ENCODE measurements at regions of chr4 and their contacts with region 1.

Region 1: DNA sequence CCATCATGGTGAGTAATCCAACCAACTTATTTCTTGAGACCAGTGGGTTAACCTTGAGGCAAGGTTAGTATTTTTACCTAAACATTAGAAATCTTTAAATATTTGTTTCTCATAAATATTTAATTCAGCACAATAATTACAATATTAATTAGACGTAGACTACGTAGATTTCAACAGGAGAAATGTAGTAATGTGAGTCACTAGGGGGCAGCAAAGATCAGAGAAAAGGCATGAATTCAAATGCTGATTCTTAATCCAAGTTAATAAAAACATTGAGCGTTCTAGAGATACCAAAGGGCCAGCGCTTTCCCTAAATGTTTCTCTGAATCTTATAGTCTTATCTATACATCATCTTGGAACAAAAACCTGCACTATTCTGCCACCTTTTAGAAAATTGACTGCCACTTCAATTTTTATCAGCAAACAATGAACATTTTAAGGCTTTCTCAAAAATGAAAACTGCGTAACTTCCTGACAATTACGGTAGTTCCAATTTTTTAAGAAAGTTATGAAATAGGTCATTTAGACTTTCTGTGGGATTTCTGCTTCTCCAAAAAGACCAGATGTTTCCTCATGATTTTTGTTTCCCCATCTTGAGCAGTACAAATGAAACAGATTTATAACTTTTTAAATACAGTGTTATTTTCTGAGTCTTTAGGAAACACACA is 180.7 kb downstream of the GASK1B start:
- DNase-seq: peak; percentile 10 to 57 (median 12)
- ATAC-seq: no peak
- H3K4me3 ChIP-seq: no peak overlapping the region
- H3K27ac ChIP-seq: no peak overlapping the region
- H3K4me1 ChIP-seq: no peaks in the 10 kb centered on the region
- H3K27me3 ChIP-seq: no peaks in the 10 kb centered on the region
- CTCF ChIP-seq: peak; percentile 28 to 67 (median 37); a peak in 3 of 6 replicates
- EP300 ChIP-seq: no peak
- POLR2A ChIP-seq: no peak
- RAD21 ChIP-seq: peak; percentile 77 to 83

Region 2: DNA sequence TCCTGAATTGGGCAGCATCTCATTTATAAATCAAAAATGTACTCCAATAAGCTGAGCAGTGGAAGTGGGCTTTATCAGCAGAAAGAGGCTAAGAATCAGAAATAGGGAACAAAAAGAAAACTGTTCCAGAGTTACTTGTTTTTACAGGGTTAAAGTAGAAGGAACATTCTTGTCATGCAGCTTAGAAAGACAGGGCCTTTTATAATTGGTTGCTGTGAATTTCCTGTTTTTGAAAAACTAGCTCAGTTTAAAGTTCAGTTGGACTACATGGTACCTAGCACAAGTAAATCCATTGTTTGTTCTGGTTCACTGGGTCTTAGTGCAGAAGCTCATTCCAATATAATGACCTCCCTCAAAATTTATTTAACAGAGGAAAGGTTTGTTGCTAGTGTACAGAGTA is 570.8 kb before region 1 on chr4:
- CTCF ChIA-PET with region 1: no interaction called
- POLR2A ChIA-PET with region 1: no interaction called
- in situ Hi-C with region 1: no loop called
- intact Hi-C with region 1: no loop called
- DNase-seq: no peak
- ATAC-seq: no peak
- H3K4me3 ChIP-seq: no peak overlapping the region
- H3K27ac ChIP-seq: no peak overlapping the region
- H3K4me1 ChIP-seq: no peaks in the 10 kb centered on the region
- H3K27me3 ChIP-seq: no peaks in the 10 kb centered on the region
- CTCF ChIP-seq: no peak
- EP300 ChIP-seq: no peak
- POLR2A ChIP-seq: no peak
- RAD21 ChIP-seq: no peak

Region 3: DNA sequence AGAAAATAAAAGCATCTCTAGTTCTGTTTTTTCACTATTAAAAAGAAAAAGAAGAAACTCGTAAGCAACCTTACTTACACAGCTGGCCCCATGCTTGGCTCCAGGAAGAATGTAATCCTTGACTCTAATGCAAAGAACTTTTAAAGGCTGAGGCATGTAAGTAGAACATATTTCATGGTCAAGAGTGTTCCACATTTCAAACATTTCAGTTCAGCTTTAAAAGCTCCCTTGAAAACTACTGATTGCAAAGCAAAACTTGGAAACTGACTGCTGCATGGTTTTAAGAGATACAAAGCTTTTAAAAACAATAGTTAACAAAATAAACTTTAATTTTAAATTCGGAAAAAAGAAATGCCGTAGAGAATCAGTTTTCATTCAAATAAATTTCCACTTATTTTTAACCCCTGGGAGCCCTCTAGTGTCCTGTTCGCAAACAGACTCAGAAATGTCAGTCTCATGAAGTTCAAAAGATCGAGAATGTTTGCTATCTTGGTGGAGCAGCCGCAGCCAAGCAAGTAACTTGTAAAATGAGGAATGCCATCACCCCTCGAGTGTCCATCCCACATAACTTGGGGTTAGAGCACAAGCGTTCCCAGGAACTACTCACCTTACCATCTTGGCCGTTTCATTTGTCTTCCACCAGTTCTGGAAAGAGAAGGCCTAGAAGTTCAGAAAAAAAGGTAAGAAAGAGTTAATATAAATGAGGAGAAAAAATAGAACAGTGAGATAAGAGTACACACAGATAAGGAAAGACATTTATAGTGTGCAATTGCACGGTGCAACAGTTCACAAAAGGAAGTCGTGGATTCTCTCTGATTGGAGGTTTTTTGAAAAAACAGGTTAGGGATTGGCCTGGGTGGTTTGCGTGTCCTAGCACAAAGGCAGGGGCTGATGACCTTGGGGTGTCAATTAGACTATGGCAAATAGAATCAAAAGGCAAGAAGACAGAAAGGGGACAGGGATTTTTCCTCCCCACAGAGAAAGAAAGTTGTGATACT is 180.4 kb after region 1 on chr4 and contains the start of gene GASK1B:
- CTCF ChIA-PET with region 1: interaction called, 15 read pairs
- POLR2A ChIA-PET with region 1: no interaction called
- in situ Hi-C with region 1: loop called (anchors 10 kb)
- intact Hi-C with region 1: loop called (anchors 1 kb)
- DNase-seq: peak in 3 of 4 experiments; percentile 14 to 61 (median 42)
- ATAC-seq: peak; percentile 81
- H3K4me3 ChIP-seq: no peak within 1 kb of the TSS
- H3K27ac ChIP-seq: no peak within 1 kb of the TSS
- H3K4me1 ChIP-seq: peaks cover 5 to 7% of the 10 kb centered on the region in 2 experiments; a peak in 4 of 5 replicates
- H3K27me3 ChIP-seq: 0 out of 5 replicates have a peak, but pooled peaks cover 0 to 5% of the 10 kb centered on the region in 2 experiments
- CTCF ChIP-seq: peak; percentile 44 to 69 (median 64); a peak in 5 of 6 replicates
- EP300 ChIP-seq: no peak
- POLR2A ChIP-seq: no peak
- RAD21 ChIP-seq: peak; percentile 64 to 70
- polyA plus RNA-seq, gene GASK1B: 0.15 to 0.32 TPM

Measured in K562 (cell line).